Gastrocnemius medialis (tissue), 4 donors: ENCODE measurements at regions of chr2 and their contacts with region 1.

Region 1: DNA sequence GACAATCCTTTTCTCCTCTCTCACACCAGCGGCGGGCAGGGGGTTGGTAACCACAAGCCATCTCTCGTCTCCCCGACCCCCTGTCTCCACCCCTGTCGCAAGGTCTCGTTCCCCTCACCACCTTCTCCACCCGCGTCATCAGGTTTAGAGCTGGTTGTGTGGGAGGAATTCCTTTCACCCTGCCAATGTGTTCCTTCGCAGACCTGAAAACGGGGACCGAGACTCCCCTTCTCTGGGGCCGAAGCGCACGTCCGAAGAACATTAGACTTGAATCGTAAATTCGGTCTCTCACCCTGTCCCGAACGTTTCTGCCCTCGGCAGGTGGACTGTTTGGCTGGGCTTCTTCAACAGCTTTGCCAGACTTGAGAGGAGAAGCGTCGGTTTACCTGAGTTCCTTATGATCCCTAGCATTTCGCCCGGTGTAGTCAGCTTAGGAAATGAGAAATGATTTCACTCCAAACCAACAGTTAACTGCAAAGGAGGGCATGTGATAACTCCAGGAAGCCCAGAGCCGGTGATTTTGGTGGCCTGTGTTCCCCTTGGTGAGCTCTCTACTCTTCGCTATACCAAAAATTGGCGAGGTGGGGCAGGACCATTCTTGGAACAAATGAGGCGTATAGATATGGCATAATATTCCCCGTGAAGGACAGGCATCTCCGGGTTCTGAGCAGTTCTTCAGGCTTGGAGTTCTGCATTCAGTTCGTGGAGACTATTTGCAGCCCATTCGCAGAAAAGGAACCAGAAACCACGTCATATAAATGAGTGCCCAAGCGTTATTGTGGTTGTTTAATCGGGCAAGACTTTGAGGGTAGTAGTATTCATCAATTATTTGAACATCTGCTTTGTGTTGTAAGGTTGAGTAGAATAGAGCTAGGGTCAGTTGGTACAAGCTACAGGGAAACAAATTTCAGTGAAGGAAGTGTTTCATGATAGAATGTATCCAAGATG is 694 bp downstream of the CFAP36 start:
- DNase-seq: no peak
- ATAC-seq: peak in 1 of 2 donors; percentile 12
- H3K4me3 ChIP-seq: peak overlapping the region; percentile 84 to 99 (median 93)
- H3K27ac ChIP-seq: peak overlapping the region; percentile 80 to 84 (median 82)
- H3K4me1 ChIP-seq: peaks cover 9 to 13% of the 10 kb centered on the region in 2 donors
- H3K27me3 ChIP-seq: no peaks in the 10 kb centered on the region
- CTCF ChIP-seq: no peak
- POLR2A ChIP-seq: no peak

Region 2: DNA sequence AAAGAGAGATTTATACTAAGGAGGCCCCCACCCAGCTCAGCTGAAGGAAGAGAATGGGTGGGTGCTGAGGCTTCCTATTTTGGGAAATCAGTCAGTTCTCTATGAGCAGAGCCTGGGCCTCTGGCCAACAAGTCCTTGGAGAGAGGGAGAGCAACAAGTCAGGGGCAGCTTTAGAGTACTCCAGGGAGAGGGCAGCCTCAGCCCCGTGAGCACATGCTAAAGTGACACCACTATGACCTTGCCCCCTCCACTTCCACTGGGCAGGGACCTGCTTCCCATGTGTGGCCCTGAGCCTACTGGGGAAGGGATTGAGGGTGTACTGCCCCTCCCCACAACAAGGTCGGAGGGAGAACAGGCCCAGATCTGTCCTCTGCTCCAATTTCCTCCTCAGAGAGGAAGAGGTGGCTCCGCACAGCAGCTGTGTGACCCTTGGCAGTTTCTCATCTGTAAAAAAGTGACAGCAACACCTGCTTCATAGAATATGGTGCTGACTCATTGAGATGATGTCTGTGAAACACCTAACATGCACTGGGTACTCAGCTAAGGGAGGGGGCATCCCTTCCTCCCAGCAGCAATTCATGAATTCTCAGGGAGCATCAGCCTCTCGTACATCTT is 361.1 kb before region 1 on chr2:
- in situ Hi-C with region 1: no loop called
- intact Hi-C with region 1: no loop called
- DNase-seq: peak in 1 of 2 donors; percentile 46
- ATAC-seq: peak; percentile 69 to 76
- H3K4me3 ChIP-seq: no peak overlapping the region
- H3K27ac ChIP-seq: peak overlapping the region in 3 of 4 donors; percentile 53 to 61 (median 58)
- H3K4me1 ChIP-seq: peaks cover 21 to 43% of the 10 kb centered on the region in 2 donors
- H3K27me3 ChIP-seq: no peaks in the 10 kb centered on the region
- CTCF ChIP-seq: no peak
- POLR2A ChIP-seq: no peak

Region 3: DNA sequence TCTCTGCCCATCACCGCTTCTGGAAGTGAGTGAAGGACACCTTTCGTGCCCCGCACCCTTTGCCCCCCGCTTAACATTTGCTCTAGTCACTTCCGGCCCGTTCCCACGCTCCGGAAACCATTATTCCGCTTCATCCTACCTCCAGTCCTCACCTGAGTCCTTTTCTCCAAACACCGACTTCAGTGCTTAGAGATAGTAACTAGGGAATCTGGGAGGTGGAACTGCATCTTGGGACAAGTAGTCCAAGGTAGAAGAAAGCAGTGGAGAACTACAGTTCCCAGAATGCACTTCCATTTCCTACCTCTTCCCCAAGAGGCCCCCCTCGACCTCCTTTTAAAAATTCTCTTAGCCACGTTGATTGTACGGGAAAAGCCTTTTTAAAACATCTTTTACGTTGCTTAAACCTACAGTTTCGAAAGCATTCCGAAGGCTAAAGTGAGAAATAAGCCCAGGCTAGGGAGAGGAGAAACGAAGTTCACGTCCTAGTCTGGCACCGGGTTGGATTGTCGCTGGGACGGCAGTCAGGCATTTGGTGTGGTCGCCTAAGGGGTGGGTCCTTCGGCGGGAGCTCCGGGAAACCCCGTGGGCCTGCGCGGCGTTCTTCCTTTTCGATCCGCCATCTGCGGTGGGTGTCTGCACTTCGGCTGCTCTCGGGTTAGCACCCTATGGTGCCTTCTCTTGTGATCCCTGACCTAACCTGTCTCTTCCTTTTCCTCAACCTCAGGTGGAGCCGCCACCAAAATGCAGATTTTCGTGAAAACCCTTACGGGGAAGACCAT is 287.9 kb before region 1 on chr2 and contains the starts of genes CLHC1 and RPS27A:
- in situ Hi-C with region 1: no loop called
- intact Hi-C with region 1: loop called (anchors 1 kb)
- DNase-seq: peak; percentile 86 to 87
- ATAC-seq: peak; percentile 98
- H3K4me3 ChIP-seq: peak within 1 kb of the TSS; percentile 72 to 96 (median 87)
- H3K27ac ChIP-seq: peak within 1 kb of the TSS; percentile 89 to 96 (median 92)
- H3K4me1 ChIP-seq: peaks cover 23 to 24% of the 10 kb centered on the region in 2 donors
- H3K27me3 ChIP-seq: no peaks in the 10 kb centered on the region
- CTCF ChIP-seq: peak in 2 of 5 experiments; percentile 9 to 16
- POLR2A ChIP-seq: peak; percentile 85 to 87
- total RNA-seq, gene CLHC1: 0.46 to 4.9 (median 0.85) TPM in 3 of 4 donors, not detected in the other
- total RNA-seq, gene RPS27A: 884 to 1,266 (median 965) TPM

Region 4: GRCh38 chr2:55268907-55269644 is 251.1 kb before region 1 on chr2 and contains the start of gene MTIF2:
- in situ Hi-C with region 1: loop called in 1 of 4 experiments (anchors 10 kb)
- intact Hi-C with region 1: loop called (anchors 5 kb)
- DNase-seq: peak; percentile 94 to 96
- ATAC-seq: peak; percentile 98 to 99
- H3K4me3 ChIP-seq: peak within 1 kb of the TSS; percentile 75 to 83 (median 79)
- H3K27ac ChIP-seq: peak within 1 kb of the TSS; percentile 81 to 93 (median 88)
- H3K4me1 ChIP-seq: peaks cover 6 to 16% of the 10 kb centered on the region in 2 donors
- H3K27me3 ChIP-seq: no peaks in the 10 kb centered on the region
- CTCF ChIP-seq: peak in 2 of 5 experiments; percentile 29 to 30
- POLR2A ChIP-seq: peak in 1 of 2 donors; percentile 57
- total RNA-seq, gene MTIF2: 23.0 to 42.5 (median 34.7) TPM

Region 5: DNA sequence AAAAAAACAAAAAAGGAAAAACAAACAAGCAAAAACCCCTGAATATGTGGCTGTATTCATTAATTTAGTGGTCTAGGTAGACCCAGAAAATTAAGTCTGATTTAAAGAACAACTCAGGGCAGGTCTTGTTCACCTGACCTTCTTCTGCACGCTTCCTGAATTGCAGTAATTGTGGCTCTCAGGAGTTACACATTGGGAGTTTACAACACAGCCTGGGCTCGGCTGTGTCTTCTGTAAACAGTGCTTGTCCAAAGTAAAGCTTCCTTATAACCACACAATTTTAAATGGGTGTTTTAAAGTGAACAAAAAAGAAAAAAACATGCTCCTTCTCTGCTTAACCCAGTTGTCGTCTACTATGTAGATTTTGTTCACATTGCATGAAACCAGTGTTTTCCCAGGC is 242.9 kb before region 1 on chr2:
- in situ Hi-C with region 1: loop called in 1 of 4 experiments (anchors 10 kb)
- intact Hi-C with region 1: no loop called
- DNase-seq: no peak
- ATAC-seq: no peak
- H3K4me3 ChIP-seq: no peak overlapping the region
- H3K27ac ChIP-seq: no peak overlapping the region
- H3K4me1 ChIP-seq: no peaks in the 10 kb centered on the region
- H3K27me3 ChIP-seq: no peaks in the 10 kb centered on the region
- CTCF ChIP-seq: no peak
- POLR2A ChIP-seq: no peak

Region 6: DNA sequence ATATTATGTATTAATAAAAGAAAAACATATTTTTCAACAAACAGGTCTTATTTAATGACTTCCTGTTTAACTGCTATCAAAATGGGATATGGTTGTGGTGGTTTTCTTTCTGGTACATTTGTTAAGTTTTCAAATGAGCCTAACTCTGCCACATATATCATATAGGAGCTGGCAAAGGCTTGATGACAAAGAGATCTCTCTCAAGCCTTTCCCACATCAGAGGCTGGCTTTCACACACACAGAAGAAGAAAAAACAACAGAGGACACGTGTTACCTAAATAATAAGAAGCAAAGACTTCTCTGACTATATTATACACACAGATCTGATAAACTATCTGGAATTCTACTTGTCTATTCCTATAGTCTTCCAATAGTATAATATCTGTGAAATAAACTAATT is 45.4 kb after region 1 on chr2:
- in situ Hi-C with region 1: no loop called
- intact Hi-C with region 1: no loop called
- DNase-seq: no peak
- ATAC-seq: no peak
- H3K4me3 ChIP-seq: no peak overlapping the region
- H3K27ac ChIP-seq: no peak overlapping the region
- H3K4me1 ChIP-seq: no peaks in the 10 kb centered on the region
- H3K27me3 ChIP-seq: no peaks in the 10 kb centered on the region
- CTCF ChIP-seq: no peak
- POLR2A ChIP-seq: no peak

Region 7: DNA sequence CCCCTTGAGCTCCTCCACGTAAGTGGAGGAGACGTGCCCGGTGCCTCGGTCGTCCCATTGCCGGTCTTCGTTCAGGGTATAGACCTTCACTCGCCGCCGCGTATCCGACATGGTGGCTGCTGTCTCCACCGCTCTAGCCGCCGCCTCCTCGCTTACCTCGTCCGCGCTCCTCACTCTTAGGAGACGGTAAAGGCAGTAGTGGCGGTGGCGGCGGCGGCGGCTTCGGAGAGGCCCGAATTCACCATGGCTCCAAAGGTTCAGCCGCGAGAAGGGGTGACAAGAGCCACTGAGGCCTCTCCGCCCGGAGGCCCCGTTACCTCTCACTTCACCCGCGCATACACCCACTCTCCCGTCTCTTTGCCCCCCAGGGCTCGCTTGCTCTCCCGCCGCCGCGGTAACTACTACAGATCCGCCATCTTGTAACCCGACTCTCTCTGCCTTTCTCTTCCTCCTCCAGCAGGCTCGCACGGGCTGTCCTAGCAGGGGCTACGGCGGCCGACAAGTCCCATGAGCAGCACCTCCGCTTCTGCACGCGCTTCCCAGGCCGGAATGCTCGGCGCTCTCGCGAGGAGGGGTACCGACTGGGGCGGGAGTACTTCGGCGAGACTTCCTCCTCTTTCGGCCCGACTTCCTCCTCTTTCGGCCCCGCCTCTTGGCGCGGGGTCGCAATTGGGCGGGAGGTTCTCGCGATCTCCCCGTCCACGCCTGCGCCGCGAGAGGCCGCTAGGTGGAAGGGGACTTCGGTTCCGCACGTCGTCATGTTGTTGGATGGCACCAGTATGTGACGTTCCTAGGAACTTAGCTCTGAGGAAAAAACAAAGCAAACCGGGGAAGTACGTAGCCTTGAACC is 97.2 kb after region 1 on chr2 and contains the start of gene PPP4R3B:
- in situ Hi-C with region 1: no loop called
- intact Hi-C with region 1: loop called (anchors 1 kb)
- DNase-seq: peak; percentile 99 to 100
- ATAC-seq: peak; percentile 83 to 86
- H3K4me3 ChIP-seq: peak within 1 kb of the TSS; percentile 85 to 99 (median 94)
- H3K27ac ChIP-seq: peak within 1 kb of the TSS; percentile 90 to 100 (median 96)
- H3K4me1 ChIP-seq: peaks cover 28 to 44% of the 10 kb centered on the region in 2 donors
- H3K27me3 ChIP-seq: no peaks in the 10 kb centered on the region
- CTCF ChIP-seq: peak; percentile 56 to 84 (median 69)
- POLR2A ChIP-seq: peak; percentile 87 to 93
- total RNA-seq, gene PPP4R3B: 20.6 to 30.3 (median 25.4) TPM

Region 8: GRCh38 chr2:55636831-55637230 is 116.6 kb after region 1 on chr2:
- in situ Hi-C with region 1: no loop called
- intact Hi-C with region 1: no loop called
- DNase-seq: no peak
- ATAC-seq: no peak
- H3K4me3 ChIP-seq: no peak overlapping the region
- H3K27ac ChIP-seq: no peak overlapping the region
- H3K4me1 ChIP-seq: no peaks in the 10 kb centered on the region
- H3K27me3 ChIP-seq: no peaks in the 10 kb centered on the region
- CTCF ChIP-seq: no peak
- POLR2A ChIP-seq: no peak